Psoas muscle (tissue), 8 donors: ENCODE measurements at regions of chr15 and their contacts with region 1.

Region 1: DNA sequence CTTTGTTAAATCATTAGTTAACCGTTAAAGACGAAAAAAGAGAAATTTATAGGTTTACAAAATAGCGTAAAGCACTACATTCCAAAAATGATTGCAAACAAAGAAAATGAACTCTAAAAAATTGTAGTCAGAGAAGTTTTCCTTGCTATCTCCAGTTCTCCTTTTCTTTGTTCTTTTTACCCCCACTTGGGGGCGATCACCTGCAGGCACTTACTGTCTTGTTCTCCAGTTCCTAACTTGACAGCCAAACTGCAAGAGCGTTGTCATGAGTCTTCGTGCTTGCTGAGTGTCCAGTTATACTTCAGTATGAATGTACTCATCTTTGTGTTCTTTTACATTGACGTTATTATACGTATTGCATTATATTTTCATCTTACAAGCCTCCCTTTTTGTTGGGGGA is 54.5 kb downstream of the CHD2 start:
- DNase-seq: no peak
- ATAC-seq: peak in 3 of 4 donors; percentile 48 to 74 (median 61)
- H3K4me3 ChIP-seq: no peak overlapping the region
- H3K27ac ChIP-seq: no peak overlapping the region
- H3K4me1 ChIP-seq: peaks cover 22% of the 10 kb centered on the region
- H3K27me3 ChIP-seq: no peaks in the 10 kb centered on the region
- CTCF ChIP-seq: peak; percentile 34

Region 2: DNA sequence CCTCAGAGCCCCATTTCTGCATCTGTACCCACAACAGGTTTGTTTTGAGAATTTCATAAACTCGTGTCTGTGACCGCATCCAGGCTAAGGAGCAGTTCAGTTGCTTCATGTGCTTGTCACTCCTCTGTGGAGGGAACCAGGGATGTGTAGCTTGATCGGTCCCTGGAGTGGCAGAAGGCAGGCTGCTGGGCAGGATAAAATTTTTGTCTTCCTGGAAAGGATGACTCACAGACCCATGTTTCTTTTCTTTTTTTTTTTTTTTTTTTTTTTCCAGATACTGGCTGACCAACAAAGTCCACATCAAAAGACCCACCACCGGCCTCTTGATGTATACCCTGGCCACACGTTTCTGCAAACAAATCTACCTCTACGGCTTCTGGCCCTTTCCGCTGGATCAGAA is 490.8 kb before region 1 on chr15:
- intact Hi-C with region 1: no loop called
- DNase-seq: no peak
- ATAC-seq: no peak
- H3K4me3 ChIP-seq: no peak overlapping the region
- H3K27ac ChIP-seq: no peak overlapping the region
- H3K4me1 ChIP-seq: no peaks in the 10 kb centered on the region
- H3K27me3 ChIP-seq: peaks cover 0 to 2% (median 0%) of the 10 kb centered on the region in 3 donors
- CTCF ChIP-seq: no peak

Region 3: GRCh38 chr15:92831655-92832328 is 122.8 kb before region 1 on chr15:
- intact Hi-C with region 1: no loop called
- DNase-seq: peak; percentile 89 to 97
- ATAC-seq: peak; percentile 94 to 98 (median 96)
- H3K4me3 ChIP-seq: peak overlapping the region; percentile 59
- H3K27ac ChIP-seq: peak overlapping the region; percentile 95
- H3K4me1 ChIP-seq: peaks cover 35% of the 10 kb centered on the region
- H3K27me3 ChIP-seq: no peaks in the 10 kb centered on the region
- CTCF ChIP-seq: peak; percentile 7

Region 4: DNA sequence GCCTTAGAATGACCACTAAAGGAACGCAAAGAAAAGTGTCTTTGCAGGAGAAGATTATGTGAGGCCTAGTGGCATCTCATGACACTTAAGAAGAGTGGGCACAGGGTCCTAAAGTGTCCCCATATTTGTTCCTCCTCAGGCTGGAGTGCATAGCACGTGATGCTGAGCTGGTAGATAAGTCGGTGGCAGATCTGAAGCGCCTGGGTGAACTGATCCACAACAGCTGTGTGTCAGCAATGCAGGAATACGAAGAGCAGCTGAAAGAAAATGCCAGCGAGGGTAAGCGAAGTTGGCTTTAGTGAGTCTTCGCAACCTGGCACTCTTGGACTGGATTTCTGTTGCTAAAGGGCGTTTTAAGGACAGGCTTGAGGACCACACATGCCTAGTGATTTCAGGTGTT is 38.1 kb after region 1 on chr15:
- intact Hi-C with region 1: loop called in 1 of 2 experiments (anchors 10 kb)
- DNase-seq: peak in 1 of 2 donors; percentile 60
- ATAC-seq: peak; percentile 93 to 96 (median 94)
- H3K4me3 ChIP-seq: no peak overlapping the region
- H3K27ac ChIP-seq: peak overlapping the region; percentile 77
- H3K4me1 ChIP-seq: peaks cover 24% of the 10 kb centered on the region
- H3K27me3 ChIP-seq: no peaks in the 10 kb centered on the region
- CTCF ChIP-seq: no peak

Region 5: DNA sequence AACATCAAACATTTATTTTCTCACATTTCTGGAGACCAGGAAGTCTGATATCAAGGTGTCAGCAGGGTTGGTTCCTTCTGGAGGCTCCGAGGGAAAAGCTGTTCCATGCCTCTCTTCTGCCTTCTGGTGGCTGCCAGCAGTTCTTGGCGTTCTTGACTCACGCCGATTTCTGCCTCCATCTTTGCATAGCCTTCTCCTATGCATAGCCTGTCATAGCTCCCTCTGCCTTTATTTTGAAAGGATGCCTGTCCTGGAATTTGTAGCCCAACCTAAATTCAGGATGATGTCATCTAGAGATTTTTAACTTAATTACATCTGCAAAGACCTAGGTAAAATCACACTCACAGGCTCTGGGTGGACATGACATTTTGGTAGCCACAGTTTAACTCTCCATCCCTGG is 64.0 kb after region 1 on chr15:
- intact Hi-C with region 1: loop called in 1 of 2 experiments (anchors 10 kb)
- DNase-seq: no peak
- ATAC-seq: peak; percentile 42 to 73 (median 60)
- H3K4me3 ChIP-seq: no peak overlapping the region
- H3K27ac ChIP-seq: peak overlapping the region; percentile 54
- H3K4me1 ChIP-seq: peaks cover 3% of the 10 kb centered on the region
- H3K27me3 ChIP-seq: no peaks in the 10 kb centered on the region
- CTCF ChIP-seq: peak; percentile 39

Region 6: GRCh38 chr15:93060336-93061263 is 106.0 kb after region 1 on chr15:
- intact Hi-C with region 1: no loop called
- DNase-seq: peak in 1 of 2 donors; percentile 42
- ATAC-seq: no peak
- H3K4me3 ChIP-seq: no peak overlapping the region
- H3K27ac ChIP-seq: no peak overlapping the region
- H3K4me1 ChIP-seq: peaks cover 78% of the 10 kb centered on the region
- H3K27me3 ChIP-seq: no peaks in the 10 kb centered on the region
- CTCF ChIP-seq: no peak

Region 7: DNA sequence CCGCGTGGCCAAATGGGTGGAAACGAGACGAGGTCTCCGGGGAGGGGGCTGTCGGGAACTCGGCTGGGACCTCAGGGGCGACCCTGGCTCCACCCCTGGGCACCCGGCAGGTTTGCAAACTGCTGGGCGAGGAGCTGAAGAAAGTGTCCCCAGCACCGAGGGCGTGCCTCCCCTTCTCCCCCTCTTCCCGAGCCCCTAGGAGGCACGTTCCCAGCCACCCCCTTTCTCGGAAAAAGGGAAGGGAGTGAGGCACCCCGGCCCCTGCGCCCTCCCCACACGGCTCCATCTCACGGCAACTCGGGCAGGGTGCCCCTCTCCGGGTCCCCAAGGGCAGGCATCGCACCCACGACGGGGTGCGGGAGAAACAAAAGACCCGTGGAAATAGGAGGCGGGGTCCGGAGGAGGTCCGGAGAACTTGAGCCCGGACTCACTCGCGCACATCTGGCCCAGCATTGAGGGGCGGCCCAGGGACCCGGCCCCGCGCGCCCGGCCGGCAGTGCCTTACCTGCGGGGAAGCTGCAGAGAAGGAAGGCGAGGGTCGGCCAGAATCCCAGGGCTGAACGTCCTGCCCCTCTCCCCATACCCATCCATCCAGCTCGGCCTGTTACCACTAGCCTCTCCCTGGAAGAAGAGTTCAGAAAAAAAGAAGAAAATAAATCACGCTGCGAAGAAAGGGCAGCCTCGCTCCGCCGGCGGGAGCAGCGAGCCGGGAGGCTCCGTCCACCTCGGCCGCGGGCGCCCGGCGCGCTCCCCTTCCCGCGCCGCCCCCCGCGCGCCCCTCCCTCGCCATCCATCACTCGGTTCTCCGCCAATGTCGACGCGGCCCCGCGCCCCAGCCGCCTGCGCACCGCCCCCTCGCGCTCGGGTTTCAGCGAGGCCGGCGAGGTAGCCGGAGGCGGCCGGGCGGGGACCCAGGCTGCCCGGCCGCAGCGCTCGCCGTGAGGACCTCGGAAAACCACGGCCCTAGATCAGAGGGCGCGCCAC is 118.1 kb after region 1 on chr15:
- intact Hi-C with region 1: no loop called
- DNase-seq: peak; percentile 90 to 94
- ATAC-seq: peak; percentile 74 to 90 (median 81)
- H3K4me3 ChIP-seq: peak overlapping the region; percentile 87
- H3K27ac ChIP-seq: peak overlapping the region; percentile 87
- H3K4me1 ChIP-seq: peaks cover 84% of the 10 kb centered on the region
- H3K27me3 ChIP-seq: no peaks in the 10 kb centered on the region
- CTCF ChIP-seq: no peak